Activated naive CD4-positive, alpha-beta T cell treated with anti-CD3 and anti-CD28 coated beads, Interleukin-2, amount 10 ng/mL, durations not matched to agents 7 days and 5 days (primary cell): ENCODE measurements at regions of chrX and their contacts with region 1.

Region 1: DNA sequence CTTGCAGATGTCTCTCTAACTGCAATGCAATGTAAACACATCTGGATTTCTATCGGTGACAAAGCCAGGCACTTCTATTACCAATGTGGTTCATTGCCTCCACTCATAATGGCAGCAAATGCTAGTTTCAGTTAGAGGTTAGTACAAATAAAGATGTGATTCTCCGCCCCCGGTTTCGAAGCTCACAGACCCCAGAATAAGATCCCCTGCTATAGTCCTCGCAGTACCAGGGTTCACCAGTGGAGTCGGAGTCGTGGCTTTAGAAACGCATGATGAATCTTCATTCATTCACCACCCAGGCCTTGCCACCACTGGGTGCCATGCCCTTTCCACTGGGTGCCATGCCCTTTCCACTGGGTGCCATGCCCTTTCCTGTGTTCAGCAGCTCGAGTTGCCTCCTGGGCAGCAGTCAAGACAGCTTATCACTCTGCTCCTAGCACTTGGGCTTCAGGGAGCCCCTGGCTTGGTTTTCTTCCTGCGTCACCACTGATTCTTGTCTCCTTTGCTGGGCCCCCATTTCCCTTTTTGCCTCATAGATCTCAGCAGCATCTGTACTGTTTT is 3.5 kb upstream of the NAA10 start:
- DNase-seq: no peak
- H3K4me3 Mint-ChIP-seq: no peak overlapping the region
- H3K27ac Mint-ChIP-seq: no peak overlapping the region
- H3K4me1 Mint-ChIP-seq: peaks cover 29% of the 10 kb centered on the region
- H3K27me3 Mint-ChIP-seq: no peaks in the 10 kb centered on the region

Region 2: GRCh38 chrX:153927922-153928760 is 10.2 kb before region 1 on chrX:
- CTCF ChIA-PET with region 1: interaction called, 241 read pairs
- DNase-seq: peak; percentile 94
- H3K4me3 Mint-ChIP-seq: peak overlapping the region; percentile 94
- H3K27ac Mint-ChIP-seq: peak overlapping the region; percentile 99
- H3K4me1 Mint-ChIP-seq: peaks cover 35% of the 10 kb centered on the region
- H3K27me3 Mint-ChIP-seq: no peaks in the 10 kb centered on the region